PC-9 (cell line): ENCODE measurements at regions of chr1 and their contacts with region 1.

Region 1: DNA sequence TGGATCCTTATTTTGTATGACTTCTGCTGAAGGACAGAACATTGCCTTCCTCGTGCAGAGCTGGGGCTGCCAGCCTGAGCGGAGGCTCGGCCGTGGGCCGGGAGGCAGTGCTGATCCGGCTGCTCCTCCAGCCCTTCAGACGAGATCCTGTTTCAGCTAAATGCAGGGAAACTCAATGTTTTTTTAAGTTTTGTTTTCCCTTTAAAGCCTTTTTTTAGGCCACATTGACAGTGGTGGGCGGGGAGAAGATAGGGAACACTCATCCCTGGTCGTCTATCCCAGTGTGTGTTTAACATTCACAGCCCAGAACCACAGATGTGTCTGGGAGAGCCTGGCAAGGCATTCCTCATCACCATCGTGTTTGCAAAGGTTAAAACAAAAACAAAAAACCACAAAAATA is 27.5 kb upstream of the KDM4A start:
- DNase-seq: no peak
- H3K4me3 ChIP-seq: no peak overlapping the region
- H3K27ac ChIP-seq: no peak overlapping the region
- H3K4me1 ChIP-seq: no peaks in the 10 kb centered on the region
- H3K27me3 ChIP-seq: no peaks in the 10 kb centered on the region
- CTCF ChIP-seq: no peak

Region 2: DNA sequence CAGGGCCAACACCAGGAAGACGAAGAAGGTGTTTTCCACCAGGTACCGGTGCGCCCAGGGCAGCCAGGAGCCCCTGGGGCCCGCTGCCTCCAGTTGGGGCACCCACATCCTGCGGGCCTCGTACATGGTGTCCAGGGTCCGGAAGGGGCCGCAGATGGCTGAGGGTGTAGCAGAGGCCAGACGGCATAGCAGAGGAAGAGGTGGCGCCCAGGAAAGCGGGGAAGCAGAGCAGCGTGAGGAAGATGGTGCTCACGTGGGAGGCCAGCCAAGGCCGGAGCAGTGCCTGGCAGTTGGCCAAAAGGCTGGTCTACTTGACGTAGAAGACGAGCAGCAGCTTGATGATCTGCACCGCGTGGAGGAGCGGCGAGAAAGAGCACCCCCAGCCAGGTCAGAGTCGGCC is 735.7 kb before region 1 on chr1:
- CTCF ChIA-PET with region 1: no interaction called
- POLR2A ChIA-PET with region 1: no interaction called
- intact Hi-C with region 1: no loop called
- DNase-seq: no peak
- H3K4me3 ChIP-seq: no peak overlapping the region
- H3K27ac ChIP-seq: no peak overlapping the region
- H3K4me1 ChIP-seq: no peaks in the 10 kb centered on the region
- H3K27me3 ChIP-seq: no peaks in the 10 kb centered on the region
- CTCF ChIP-seq: no peak

Region 3: GRCh38 chr1:43639976-43640789 is 17.7 kb after region 1 on chr1:
- CTCF ChIA-PET with region 1: no interaction called
- POLR2A ChIA-PET with region 1: interaction called, 13 read pairs
- intact Hi-C with region 1: no loop called
- DNase-seq: no peak
- H3K4me3 ChIP-seq: no peak overlapping the region
- H3K27ac ChIP-seq: no peak overlapping the region
- H3K4me1 ChIP-seq: peaks cover 45% of the 10 kb centered on the region
- H3K27me3 ChIP-seq: no peaks in the 10 kb centered on the region
- CTCF ChIP-seq: no peak